Activated CD4-positive, alpha-beta T cell treated with anti-CD3 and anti-CD28 coated beads for 36 hours (primary cell): ENCODE measurements at regions of chr1 and their contacts with region 1.

Region 1: GRCh38 chr1:247936415-247936814 is 11.7 kb downstream of the OR2AJ1 start:
- DNase-seq: no peak
- ATAC-seq: no peak
- H3K4me3 Mint-ChIP-seq: no peak overlapping the region
- H3K27ac Mint-ChIP-seq: no peak overlapping the region
- H3K4me1 Mint-ChIP-seq: no peaks in the 10 kb centered on the region
- H3K27me3 Mint-ChIP-seq: peaks cover 2% of the 10 kb centered on the region

Region 2: DNA sequence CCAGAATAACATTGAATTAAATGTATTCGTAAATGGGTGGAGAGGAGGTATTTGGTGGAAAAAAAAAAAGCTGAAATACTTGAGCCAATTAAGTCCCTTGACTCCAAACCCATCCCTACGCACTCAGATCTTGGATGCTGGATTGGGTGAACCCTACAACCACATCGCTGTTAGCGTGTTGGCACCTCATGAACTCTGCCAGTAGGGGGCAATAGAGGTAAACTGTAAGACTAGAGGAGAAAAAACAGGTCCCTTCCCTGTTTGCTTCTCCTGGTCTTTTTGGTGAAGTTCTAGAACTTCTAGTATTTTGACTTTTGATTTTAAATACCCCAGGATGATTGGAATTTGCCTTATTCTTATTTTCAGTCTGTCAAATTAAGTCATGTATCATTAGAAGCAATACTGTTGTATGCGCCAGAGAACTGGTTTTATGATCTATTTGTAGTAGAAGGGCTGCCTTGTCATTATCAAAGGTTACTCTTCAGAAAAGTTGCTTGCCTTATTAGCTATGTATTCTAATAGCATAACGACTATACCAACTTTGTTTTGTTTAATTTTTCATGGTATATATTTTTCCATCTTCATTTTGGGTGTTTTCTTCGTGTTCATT is 255.0 kb before region 1 on chr1:
- CTCF ChIA-PET with region 1: no interaction called
- POLR2A ChIA-PET with region 1: no interaction called
- intact Hi-C with region 1: loop called in 1 of 2 experiments (anchors 5 kb)
- DNase-seq: peak; percentile 63
- ATAC-seq: peak; percentile 65
- H3K4me3 Mint-ChIP-seq: no peak overlapping the region
- H3K27ac Mint-ChIP-seq: no peak overlapping the region
- H3K4me1 Mint-ChIP-seq: no peaks in the 10 kb centered on the region
- H3K27me3 Mint-ChIP-seq: peaks cover 3% of the 10 kb centered on the region

Region 3: DNA sequence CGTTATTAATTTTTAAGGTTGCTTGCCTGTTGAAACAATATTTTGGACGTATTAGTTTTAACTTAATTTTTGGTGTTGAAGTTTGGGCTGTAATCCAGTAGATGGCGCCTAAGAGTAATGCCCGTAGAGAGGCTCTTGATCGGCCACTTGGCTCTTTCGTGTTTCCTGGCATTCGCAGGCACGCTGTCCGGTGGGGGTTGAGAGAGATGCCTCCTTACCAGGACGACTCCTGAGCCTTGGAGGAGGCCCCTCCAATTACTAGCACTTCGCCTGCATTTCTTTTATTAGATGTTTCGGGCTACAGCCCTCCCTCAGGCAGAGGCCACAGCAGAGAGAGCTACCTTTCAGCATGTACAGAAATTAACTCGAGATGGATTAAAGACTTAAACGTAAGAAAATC is 306.8 kb after region 1 on chr1:
- CTCF ChIA-PET with region 1: interaction called, 5 read pairs
- POLR2A ChIA-PET with region 1: no interaction called
- intact Hi-C with region 1: loop called in 1 of 2 experiments (anchors 1 kb)
- DNase-seq: peak; percentile 42
- ATAC-seq: peak; percentile 55
- H3K4me3 Mint-ChIP-seq: no peak overlapping the region
- H3K27ac Mint-ChIP-seq: no peak overlapping the region
- H3K4me1 Mint-ChIP-seq: peaks cover 2% of the 10 kb centered on the region
- H3K27me3 Mint-ChIP-seq: peaks cover 8% of the 10 kb centered on the region

Region 4: DNA sequence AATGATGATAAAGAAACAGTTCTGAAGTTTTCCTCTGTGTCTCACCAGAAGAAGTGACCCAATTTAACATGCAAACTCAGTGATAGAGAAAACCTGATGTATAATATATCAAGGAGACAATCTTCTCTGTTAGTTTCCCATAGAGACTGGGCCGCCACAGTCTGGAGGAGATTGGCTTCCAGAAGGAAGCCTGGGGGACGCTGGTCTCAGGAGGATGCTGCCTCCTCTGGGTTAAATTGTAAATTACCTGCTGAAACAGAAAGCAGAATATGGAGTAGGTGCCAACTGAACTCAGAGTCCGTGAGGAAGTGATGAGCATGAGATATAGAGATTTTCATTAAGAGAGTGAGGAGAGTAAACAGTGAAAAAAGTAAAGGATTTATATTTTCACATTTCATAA is 750.4 kb after region 1 on chr1:
- CTCF ChIA-PET with region 1: no interaction called
- POLR2A ChIA-PET with region 1: no interaction called
- intact Hi-C with region 1: loop called in 1 of 2 experiments (anchors 10 kb)
- DNase-seq: peak; percentile 34
- ATAC-seq: peak; percentile 53
- H3K4me3 Mint-ChIP-seq: no peak overlapping the region
- H3K27ac Mint-ChIP-seq: no peak overlapping the region
- H3K4me1 Mint-ChIP-seq: peaks cover 7% of the 10 kb centered on the region
- H3K27me3 Mint-ChIP-seq: peaks cover 3% of the 10 kb centered on the region

Region 5: GRCh38 chr1:248821101-248821500 is 884.7 kb after region 1 on chr1:
- CTCF ChIA-PET with region 1: interaction called, 3 read pairs
- POLR2A ChIA-PET with region 1: no interaction called
- intact Hi-C with region 1: loop called in 1 of 2 experiments (anchors 5 kb)
- DNase-seq: no peak
- ATAC-seq: no peak
- H3K4me3 Mint-ChIP-seq: no peak overlapping the region
- H3K27ac Mint-ChIP-seq: no peak overlapping the region
- H3K4me1 Mint-ChIP-seq: peaks cover 90% of the 10 kb centered on the region
- H3K27me3 Mint-ChIP-seq: no peaks in the 10 kb centered on the region